T-cell (primary cell): ENCODE measurements at regions of chr11 and their contacts with region 1.

Region 1: GRCh38 chr11:102341844-102342318 is 5.1 kb upstream of the BIRC2 start:
- DNase-seq: peak in 34 of 35 experiments; percentile 29 to 90 (median 62)
- ATAC-seq: peak; percentile 31 to 57 (median 54)
- H3K4me3 ChIP-seq: no peak overlapping the region
- H3K4me3 Mint-ChIP-seq: no peak overlapping the region
- H3K27ac ChIP-seq: no peak overlapping the region
- H3K27ac Mint-ChIP-seq: peak overlapping the region in 1 of 2 donors; percentile 54
- H3K4me1 ChIP-seq: peaks cover 6 to 11% of the 10 kb centered on the region in 2 experiments
- H3K4me1 Mint-ChIP-seq: peaks cover 18 to 30% (median 20%) of the 10 kb centered on the region in 3 donors
- H3K27me3 ChIP-seq: no peaks in the 10 kb centered on the region
- H3K27me3 Mint-ChIP-seq: no peaks in the 10 kb centered on the region

Region 2: DNA sequence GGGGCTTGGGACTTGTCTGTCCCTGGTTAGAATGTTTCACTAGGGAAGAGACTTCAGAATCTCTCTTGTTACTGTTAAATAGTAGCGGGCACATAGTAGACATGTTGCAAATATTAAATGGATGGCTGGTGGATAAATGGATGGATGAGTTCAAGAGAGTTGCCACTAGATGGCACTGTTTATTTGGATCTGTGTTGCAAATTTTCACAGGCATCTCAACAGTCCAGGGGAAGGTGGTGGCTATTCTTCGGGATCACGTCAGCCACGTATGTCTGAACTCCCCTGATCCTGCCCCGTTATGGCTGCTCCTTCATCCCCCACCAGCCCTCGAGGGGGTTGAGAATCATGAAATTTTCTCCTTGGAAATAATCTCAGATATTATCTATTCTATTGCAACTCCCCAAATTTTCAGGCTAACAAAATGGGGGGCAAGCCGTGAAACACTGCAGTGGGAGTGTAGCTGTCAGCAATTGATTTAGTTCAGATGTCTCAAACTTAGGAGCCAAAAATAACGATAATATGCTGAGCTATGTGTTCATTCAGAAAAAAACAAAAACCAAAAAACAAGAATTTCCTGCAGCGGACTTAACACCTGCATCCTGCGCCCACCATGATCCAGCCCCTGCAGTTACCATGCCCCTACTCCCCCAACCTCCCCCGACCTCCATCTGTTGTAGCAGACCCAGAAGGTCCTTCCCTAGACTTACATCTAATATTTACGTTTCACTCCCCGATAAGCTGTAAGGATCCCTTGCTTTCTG is 53.7 kb before region 1 on chr11:
- CTCF ChIA-PET with region 1: interaction called, 15 to 23 read pairs
- POLR2A ChIA-PET with region 1: interaction called in 1 of 2 experiments, 5 read pairs
- DNase-seq: peak in 11 of 35 experiments; percentile 10 to 85 (median 23)
- ATAC-seq: peak; percentile 76 to 87 (median 81)
- H3K4me3 ChIP-seq: peak overlapping the region in 1 of 2 donors; percentile 39
- H3K4me3 Mint-ChIP-seq: peak overlapping the region in 1 of 3 donors; percentile 55
- H3K27ac ChIP-seq: no peak overlapping the region
- H3K27ac Mint-ChIP-seq: no peak overlapping the region
- H3K4me1 ChIP-seq: peaks cover 2 to 9% of the 10 kb centered on the region in 2 experiments
- H3K4me1 Mint-ChIP-seq: peaks cover 12 to 34% (median 18%) of the 10 kb centered on the region in 3 donors
- H3K27me3 ChIP-seq: no peaks in the 10 kb centered on the region
- H3K27me3 Mint-ChIP-seq: no peaks in the 10 kb centered on the region

Region 3: GRCh38 chr11:102306048-102306585 is 35.8 kb before region 1 on chr11:
- CTCF ChIA-PET with region 1: interaction called in 1 of 2 experiments, 11 read pairs
- POLR2A ChIA-PET with region 1: interaction called in 1 of 2 experiments, 4 read pairs
- DNase-seq: peak in 3 of 35 experiments; percentile 22 to 64 (median 49)
- ATAC-seq: peak; percentile 44 to 66 (median 60)
- H3K4me3 ChIP-seq: no peak overlapping the region
- H3K4me3 Mint-ChIP-seq: peak overlapping the region; percentile 37 to 60 (median 49)
- H3K27ac ChIP-seq: peak overlapping the region; percentile 90
- H3K27ac Mint-ChIP-seq: peak overlapping the region; percentile 95 to 97
- H3K4me1 ChIP-seq: peaks cover 30 to 41% of the 10 kb centered on the region in 2 experiments
- H3K4me1 Mint-ChIP-seq: peaks cover 61 to 78% (median 66%) of the 10 kb centered on the region in 3 donors
- H3K27me3 ChIP-seq: no peaks in the 10 kb centered on the region
- H3K27me3 Mint-ChIP-seq: no peaks in the 10 kb centered on the region

Region 4: GRCh38 chr11:102361086-102362031 is 19.5 kb after region 1 on chr11:
- CTCF ChIA-PET with region 1: interaction called, 25 to 29 read pairs
- POLR2A ChIA-PET with region 1: interaction called, 4 to 50 read pairs
- DNase-seq: peak in 34 of 35 experiments; percentile 25 to 76 (median 52)
- ATAC-seq: peak; percentile 80 to 92 (median 89)
- H3K4me3 ChIP-seq: no peak overlapping the region
- H3K4me3 Mint-ChIP-seq: peak overlapping the region; percentile 64 to 69 (median 66)
- H3K27ac ChIP-seq: peak overlapping the region; percentile 70
- H3K27ac Mint-ChIP-seq: peak overlapping the region; percentile 91 to 93
- H3K4me1 ChIP-seq: peaks cover 13 to 21% of the 10 kb centered on the region in 2 experiments
- H3K4me1 Mint-ChIP-seq: peaks cover 61 to 70% (median 68%) of the 10 kb centered on the region in 3 donors
- H3K27me3 ChIP-seq: no peaks in the 10 kb centered on the region
- H3K27me3 Mint-ChIP-seq: no peaks in the 10 kb centered on the region

Region 5: GRCh38 chr11:102495161-102496042 is 153.5 kb after region 1 on chr11:
- CTCF ChIA-PET with region 1: interaction called, 6 to 17 read pairs
- POLR2A ChIA-PET with region 1: no interaction called
- DNase-seq: peak in 30 of 35 experiments; percentile 4 to 91 (median 30)
- ATAC-seq: peak; percentile 69 to 86 (median 78)
- H3K4me3 ChIP-seq: no peak overlapping the region
- H3K4me3 Mint-ChIP-seq: no peak overlapping the region
- H3K27ac ChIP-seq: no peak overlapping the region
- H3K27ac Mint-ChIP-seq: no peak overlapping the region
- H3K4me1 ChIP-seq: no peaks in the 10 kb centered on the region
- H3K4me1 Mint-ChIP-seq: peaks cover 7 to 11% (median 8%) of the 10 kb centered on the region in 3 donors
- H3K27me3 ChIP-seq: peaks cover 0 to 9% of the 10 kb centered on the region in 2 experiments
- H3K27me3 Mint-ChIP-seq: peaks cover 5 to 6% of the 10 kb centered on the region in 2 donors

Region 6: DNA sequence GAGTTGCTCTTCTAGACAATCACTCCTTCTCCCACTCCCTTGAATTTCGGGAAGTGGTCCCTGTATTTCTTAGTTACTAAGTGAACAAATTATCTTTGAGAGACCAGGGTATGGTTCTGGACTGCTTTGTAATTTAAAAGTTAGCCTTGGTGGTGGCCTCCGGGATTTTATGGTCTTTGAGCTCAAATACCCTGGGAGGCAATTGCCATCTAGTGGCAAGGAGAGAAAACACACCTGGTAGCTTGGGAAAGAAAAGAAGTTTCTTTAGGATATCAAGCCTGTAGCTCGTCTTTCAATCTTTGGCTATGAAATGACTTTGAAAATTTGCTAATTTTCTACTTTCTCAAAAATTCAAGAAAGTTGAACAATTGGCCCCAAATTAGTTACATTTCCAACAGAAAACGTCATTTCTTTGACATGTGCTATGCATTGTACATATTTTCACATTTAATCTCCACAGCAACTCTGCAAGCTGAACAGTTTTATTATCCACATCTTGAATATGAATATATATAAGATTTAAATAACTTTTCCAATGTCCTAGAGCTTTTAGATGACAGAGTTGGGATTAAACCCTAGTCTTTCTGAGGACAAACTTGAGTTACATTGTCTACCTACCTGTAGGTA is 324.6 kb after region 1 on chr11:
- CTCF ChIA-PET with region 1: interaction called, 15 to 51 read pairs
- POLR2A ChIA-PET with region 1: no interaction called
- DNase-seq: peak in 6 of 35 experiments; percentile 1 to 53 (median 10)
- ATAC-seq: peak in 2 of 4 experiments; percentile 42 to 46
- H3K4me3 ChIP-seq: no peak overlapping the region
- H3K4me3 Mint-ChIP-seq: no peak overlapping the region
- H3K27ac ChIP-seq: no peak overlapping the region
- H3K27ac Mint-ChIP-seq: no peak overlapping the region
- H3K4me1 ChIP-seq: peaks cover 0 to 4% of the 10 kb centered on the region in 2 experiments
- H3K4me1 Mint-ChIP-seq: peaks cover 0 to 5% (median 1%) of the 10 kb centered on the region in 3 donors
- H3K27me3 ChIP-seq: no peaks in the 10 kb centered on the region
- H3K27me3 Mint-ChIP-seq: peaks cover 5 to 7% of the 10 kb centered on the region in 2 donors